ENCODE measurements at regions of chr3 and their contacts with region 1.

Region 1: GRCh38 chr3:119891944-119892721 is 110.2 kb downstream of the NR1I2 start:
- DNase-seq: no peak

Region 2: DNA sequence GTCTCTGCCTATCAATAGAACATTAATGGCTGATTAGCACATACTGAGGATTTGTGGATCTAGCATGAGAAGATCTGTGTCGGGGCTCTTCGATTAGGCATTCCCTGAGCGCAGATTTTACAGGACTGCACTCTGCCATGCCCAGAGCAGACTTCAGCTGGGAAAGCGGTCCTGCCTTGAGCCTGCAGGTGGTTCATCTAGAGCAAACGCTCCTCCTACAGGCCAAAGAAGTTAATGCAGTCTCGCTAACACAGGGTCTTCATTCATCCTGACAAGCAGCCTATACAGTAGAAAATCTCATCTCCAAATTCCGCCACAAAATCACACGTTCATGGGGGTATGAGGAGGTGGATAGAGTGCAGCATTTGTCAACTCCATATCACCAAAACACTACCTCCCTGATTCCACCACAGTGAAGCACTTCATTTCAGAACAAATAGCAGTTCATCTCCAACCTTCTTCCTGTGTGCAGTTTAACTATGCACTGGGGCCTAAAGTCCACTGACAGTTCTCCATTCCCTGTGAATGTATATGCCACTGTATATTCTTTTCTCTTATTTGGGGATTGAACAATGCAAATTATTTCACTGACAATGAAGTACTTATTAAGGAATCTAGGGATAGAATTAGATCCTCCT is 1263.3 kb before region 1 on chr3:
- intact Hi-C with region 1: no loop called
- DNase-seq: no peak

Region 3: GRCh38 chr3:119194237-119195150 is 697.6 kb before region 1 on chr3:
- intact Hi-C with region 1: no loop called
- DNase-seq: no peak

Region 4: GRCh38 chr3:119310071-119310470 is 582.1 kb before region 1 on chr3:
- intact Hi-C with region 1: loop called in 1 of 2 experiments (anchors 10 kb)
- DNase-seq: no peak

Region 5: DNA sequence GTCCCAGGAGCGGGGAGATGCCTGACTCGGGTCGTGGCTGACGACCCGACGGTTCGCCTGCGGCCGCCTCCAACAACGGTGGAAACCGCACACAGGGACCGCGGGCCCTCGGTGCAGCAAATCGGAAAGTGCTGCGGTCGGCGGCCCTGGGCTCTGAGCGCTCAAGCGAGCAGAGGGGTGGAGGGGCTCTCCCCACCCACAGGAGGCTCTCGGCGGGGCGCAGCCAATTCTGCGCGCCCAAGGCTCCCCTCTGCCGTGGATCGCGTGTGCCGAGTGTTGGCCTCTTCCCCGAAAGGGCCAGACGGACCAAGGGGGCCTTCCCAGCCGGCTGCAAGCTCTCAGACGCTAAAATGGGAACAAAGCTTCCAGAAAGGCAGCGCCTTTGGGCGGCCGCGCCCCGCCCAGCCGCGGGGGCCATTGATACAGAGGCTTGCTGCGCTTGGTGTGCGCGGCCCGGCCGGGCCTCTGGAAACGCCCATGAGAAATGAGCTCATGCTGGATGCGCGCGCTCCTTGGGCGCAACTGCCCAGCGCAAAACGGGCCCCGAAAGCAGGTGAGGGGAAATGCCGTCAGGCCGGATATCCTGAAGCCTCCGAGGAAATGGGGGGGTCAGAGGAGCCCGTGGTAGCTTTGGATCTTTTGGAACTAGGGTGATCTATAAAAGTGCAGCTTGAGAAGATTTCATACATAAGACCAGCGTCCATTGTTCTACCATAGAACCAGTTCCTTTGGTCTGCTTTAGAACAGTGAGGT is 203.3 kb after region 1 on chr3:
- intact Hi-C with region 1: loop called in 1 of 2 experiments (anchors 10 kb)
- DNase-seq: peak; percentile 97

Region 6: GRCh38 chr3:120404876-120405275 is 512.7 kb after region 1 on chr3:
- intact Hi-C with region 1: loop called in 1 of 2 experiments (anchors 10 kb)
- DNase-seq: no peak